ENCODE measurements at regions of chr11 and their contacts with region 1.

Region 1: GRCh38 chr11:17528181-17528691 is 16.0 kb downstream of the USH1C start:
- DNase-seq: no peak
- H3K4me3 ChIP-seq: no peak overlapping the region
- H3K27ac ChIP-seq: no peak overlapping the region
- H3K4me1 ChIP-seq: no peaks in the 10 kb centered on the region
- H3K27me3 ChIP-seq: no peaks in the 10 kb centered on the region
- CTCF ChIP-seq: peak in 3 of 4 experiments; percentile 27 to 57 (median 54)
- EP300 ChIP-seq: no peak
- POLR2A ChIP-seq: no peak

Region 2: GRCh38 chr11:17384002-17384511 is 144.2 kb before region 1 on chr11:
- intact Hi-C with region 1: loop called (anchors 1 kb)
- DNase-seq: peak; percentile 88
- H3K4me3 ChIP-seq: no peak overlapping the region
- H3K27ac ChIP-seq: no peak overlapping the region
- H3K4me1 ChIP-seq: peaks cover 0 to 13% (median 5%) of the 10 kb centered on the region in 4 donors
- H3K27me3 ChIP-seq: no peaks in the 10 kb centered on the region
- CTCF ChIP-seq: peak; percentile 47 to 88 (median 84)
- EP300 ChIP-seq: no peak
- POLR2A ChIP-seq: no peak

Region 3: DNA sequence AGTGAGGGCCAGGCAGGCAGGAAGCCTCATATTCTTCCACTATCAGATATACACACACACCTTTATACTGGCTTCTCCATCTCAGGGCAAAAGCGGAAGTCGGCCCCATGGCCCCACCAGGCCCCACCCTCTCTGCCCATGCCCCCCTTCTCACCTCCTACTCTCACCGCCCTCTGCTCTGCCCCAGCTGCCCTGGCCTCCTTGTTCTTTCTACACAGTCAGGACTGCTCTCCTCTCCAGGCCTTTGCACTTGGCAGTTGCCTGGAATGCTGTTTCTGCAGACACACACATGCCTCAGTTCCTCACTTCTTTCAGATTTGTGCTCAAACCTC is 44.1 kb after region 1 on chr11:
- intact Hi-C with region 1: no loop called
- DNase-seq: no peak
- H3K4me3 ChIP-seq: no peak overlapping the region
- H3K27ac ChIP-seq: no peak overlapping the region
- H3K4me1 ChIP-seq: no peaks in the 10 kb centered on the region
- H3K27me3 ChIP-seq: no peaks in the 10 kb centered on the region
- CTCF ChIP-seq: no peak
- EP300 ChIP-seq: no peak
- POLR2A ChIP-seq: no peak

Region 4: DNA sequence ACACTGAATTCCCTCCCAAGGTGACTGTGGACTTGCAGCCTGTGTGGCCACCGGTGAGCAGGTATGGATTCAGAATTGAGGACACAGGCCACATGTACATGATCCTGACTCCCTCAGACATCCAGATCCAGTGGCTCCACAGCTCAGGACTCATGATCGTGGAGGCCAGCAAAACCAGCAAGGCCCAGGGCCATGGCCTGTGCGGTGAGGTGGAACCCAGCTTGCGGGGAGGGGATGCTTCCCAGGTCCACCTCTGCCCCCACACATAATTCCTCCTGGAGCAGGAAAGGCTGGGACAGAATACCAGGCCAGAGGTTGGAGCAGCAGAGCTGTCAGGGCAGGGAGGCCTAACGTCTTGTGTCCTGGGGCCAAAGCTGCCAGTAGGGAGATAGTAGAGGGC is 100.9 kb after region 1 on chr11:
- intact Hi-C with region 1: no loop called
- DNase-seq: no peak
- H3K4me3 ChIP-seq: no peak overlapping the region
- H3K27ac ChIP-seq: no peak overlapping the region
- H3K4me1 ChIP-seq: no peaks in the 10 kb centered on the region
- H3K27me3 ChIP-seq: no peaks in the 10 kb centered on the region
- CTCF ChIP-seq: no peak
- EP300 ChIP-seq: no peak
- POLR2A ChIP-seq: no peak